ENCODE measurements at regions of chr17 and their contacts with region 1.

Region 1: GRCh38 chr17:31094600-31095238 is at the start of gene NF1:
- DNase-seq: peak; percentile 93
- H3K4me3 ChIP-seq: peak within 1 kb of the TSS; percentile 64 to 87 (median 68)
- H3K27ac ChIP-seq: peak within 1 kb of the TSS; percentile 59
- H3K4me1 ChIP-seq: peaks cover 7% of the 10 kb centered on the region
- H3K27me3 ChIP-seq: no peaks in the 10 kb centered on the region
- CTCF ChIP-seq: no peak
- total RNA-seq, gene NF1: 65.3 to 83.9 TPM

Region 2: DNA sequence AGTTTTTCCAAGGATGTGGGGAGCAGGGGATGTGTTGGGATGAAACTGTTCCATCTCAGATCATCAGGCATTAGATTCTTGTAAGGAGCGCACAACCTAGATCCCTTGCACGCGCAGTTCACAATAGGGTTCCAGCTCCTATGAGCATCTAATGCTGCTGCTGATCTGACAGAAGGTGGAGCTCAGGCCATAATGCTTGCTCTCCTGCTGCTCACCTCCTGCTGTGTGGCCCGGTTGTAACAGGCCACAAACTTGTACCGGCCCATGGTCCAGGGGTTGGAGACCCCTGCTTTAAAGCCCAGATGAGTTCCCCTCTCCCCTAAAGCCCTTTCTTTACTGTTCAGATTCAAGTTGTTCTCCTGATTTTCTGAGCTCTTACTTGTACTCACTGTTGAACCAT is 79.1 kb before region 1 on chr17:
- CTCF ChIA-PET with region 1: no interaction called
- dilution Hi-C with region 1: no loop called
- in situ Hi-C with region 1: no loop called
- intact Hi-C with region 1: loop called (anchors 5 kb)
- DNase-seq: no peak
- H3K4me3 ChIP-seq: no peak overlapping the region
- H3K27ac ChIP-seq: no peak overlapping the region
- H3K4me1 ChIP-seq: no peaks in the 10 kb centered on the region
- H3K27me3 ChIP-seq: no peaks in the 10 kb centered on the region
- CTCF ChIP-seq: no peak

Region 3: GRCh38 chr17:31052187-31052889 is 42.4 kb before region 1 on chr17:
- CTCF ChIA-PET with region 1: no interaction called
- dilution Hi-C with region 1: no loop called
- in situ Hi-C with region 1: no loop called
- intact Hi-C with region 1: loop called (anchors 1 kb)
- DNase-seq: peak; percentile 99
- H3K4me3 ChIP-seq: peak overlapping the region; percentile 5 to 30 (median 23)
- H3K27ac ChIP-seq: peak overlapping the region; percentile 86
- H3K4me1 ChIP-seq: peaks cover 19% of the 10 kb centered on the region
- H3K27me3 ChIP-seq: no peaks in the 10 kb centered on the region
- CTCF ChIP-seq: no peak

Region 4: GRCh38 chr17:31068291-31068690 is 26.4 kb before region 1 on chr17:
- CTCF ChIA-PET with region 1: no interaction called
- dilution Hi-C with region 1: no loop called
- in situ Hi-C with region 1: no loop called
- intact Hi-C with region 1: loop called (anchors 1 kb)
- DNase-seq: peak; percentile 45
- H3K4me3 ChIP-seq: no peak overlapping the region
- H3K27ac ChIP-seq: peak overlapping the region; percentile 58
- H3K4me1 ChIP-seq: peaks cover 35% of the 10 kb centered on the region
- H3K27me3 ChIP-seq: no peaks in the 10 kb centered on the region
- CTCF ChIP-seq: peak; percentile 32 to 56

Region 5: DNA sequence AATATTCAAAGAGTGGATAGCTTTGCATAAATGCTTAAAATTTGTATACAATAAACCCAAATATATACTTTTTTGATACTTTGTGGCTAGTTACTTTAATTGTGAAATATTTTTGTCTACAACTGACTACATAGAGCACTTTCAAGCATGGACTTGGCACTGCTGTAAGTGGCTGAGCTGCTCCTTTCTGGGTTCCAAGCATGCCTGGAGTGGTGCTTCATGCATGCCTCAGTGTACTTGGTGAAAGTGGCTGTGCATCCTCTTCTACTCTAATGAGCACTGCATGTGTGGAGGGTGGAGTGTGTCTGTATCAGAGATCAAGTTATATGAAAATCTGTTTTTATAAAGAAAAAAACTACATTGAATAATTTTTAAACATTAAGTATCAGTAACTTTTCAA is 108.2 kb after region 1 on chr17:
- CTCF ChIA-PET with region 1: no interaction called
- dilution Hi-C with region 1: no loop called
- in situ Hi-C with region 1: no loop called
- intact Hi-C with region 1: no loop called
- DNase-seq: no peak
- H3K4me3 ChIP-seq: no peak overlapping the region
- H3K27ac ChIP-seq: no peak overlapping the region
- H3K4me1 ChIP-seq: peaks cover 6% of the 10 kb centered on the region
- H3K27me3 ChIP-seq: no peaks in the 10 kb centered on the region
- CTCF ChIP-seq: no peak

Measured in mammary epithelial cell (primary cell).